Caco-2 (cell line): ENCODE measurements at regions of chr3 and their contacts with region 1.

Region 1: GRCh38 chr3:50519471-50520089 is 16.1 kb upstream of the CACNA2D2 start:
- DNase-seq: peak; percentile 74 to 83
- H3K4me3 ChIP-seq: no peak overlapping the region
- H3K4me3 Mint-ChIP-seq: no peak overlapping the region
- H3K27ac Mint-ChIP-seq: no peak overlapping the region
- H3K4me1 ChIP-seq: 0 out of 2 replicates have a peak, but pooled peaks cover 11% of the 10 kb centered on the region
- H3K4me1 Mint-ChIP-seq: no peaks in the 10 kb centered on the region
- H3K27me3 ChIP-seq: no peaks in the 10 kb centered on the region; the same call in none of the 2 replicates
- H3K27me3 Mint-ChIP-seq: peaks cover 4% of the 10 kb centered on the region
- CTCF ChIP-seq: peak; percentile 91 to 96

Region 2: GRCh38 chr3:50550079-50550741 is 30.6 kb after region 1 on chr3:
- CTCF ChIA-PET with region 1: no interaction called
- POLR2A ChIA-PET with region 1: no interaction called
- intact Hi-C with region 1: loop called (anchors 2 kb)
- DNase-seq: peak; percentile 52 to 68
- H3K4me3 ChIP-seq: no peak overlapping the region
- H3K4me3 Mint-ChIP-seq: no peak overlapping the region
- H3K27ac Mint-ChIP-seq: no peak overlapping the region
- H3K4me1 ChIP-seq: no peaks in the 10 kb centered on the region
- H3K4me1 Mint-ChIP-seq: no peaks in the 10 kb centered on the region
- H3K27me3 ChIP-seq: no peaks in the 10 kb centered on the region
- H3K27me3 Mint-ChIP-seq: no peaks in the 10 kb centered on the region
- CTCF ChIP-seq: peak; percentile 72 to 74